ENCODE measurements at regions of chr9 and their contacts with region 1.

Region 1: GRCh38 chr9:121545875-121546423 is 46.3 kb upstream of the GGTA1 start:
- DNase-seq: peak; percentile 86 to 92
- ATAC-seq: peak; percentile 81 to 82
- H3K4me3 ChIP-seq: peak overlapping the region; percentile 10 to 40 (median 35)
- H3K27ac ChIP-seq: peak overlapping the region in 1 of 4 donors; percentile 34
- H3K4me1 ChIP-seq: peaks cover 0 to 9% of the 10 kb centered on the region in 2 donors
- H3K27me3 ChIP-seq: no peaks in the 10 kb centered on the region
- CTCF ChIP-seq: peak; percentile 80 to 98 (median 96)
- POLR2A ChIP-seq: no peak

Region 2: DNA sequence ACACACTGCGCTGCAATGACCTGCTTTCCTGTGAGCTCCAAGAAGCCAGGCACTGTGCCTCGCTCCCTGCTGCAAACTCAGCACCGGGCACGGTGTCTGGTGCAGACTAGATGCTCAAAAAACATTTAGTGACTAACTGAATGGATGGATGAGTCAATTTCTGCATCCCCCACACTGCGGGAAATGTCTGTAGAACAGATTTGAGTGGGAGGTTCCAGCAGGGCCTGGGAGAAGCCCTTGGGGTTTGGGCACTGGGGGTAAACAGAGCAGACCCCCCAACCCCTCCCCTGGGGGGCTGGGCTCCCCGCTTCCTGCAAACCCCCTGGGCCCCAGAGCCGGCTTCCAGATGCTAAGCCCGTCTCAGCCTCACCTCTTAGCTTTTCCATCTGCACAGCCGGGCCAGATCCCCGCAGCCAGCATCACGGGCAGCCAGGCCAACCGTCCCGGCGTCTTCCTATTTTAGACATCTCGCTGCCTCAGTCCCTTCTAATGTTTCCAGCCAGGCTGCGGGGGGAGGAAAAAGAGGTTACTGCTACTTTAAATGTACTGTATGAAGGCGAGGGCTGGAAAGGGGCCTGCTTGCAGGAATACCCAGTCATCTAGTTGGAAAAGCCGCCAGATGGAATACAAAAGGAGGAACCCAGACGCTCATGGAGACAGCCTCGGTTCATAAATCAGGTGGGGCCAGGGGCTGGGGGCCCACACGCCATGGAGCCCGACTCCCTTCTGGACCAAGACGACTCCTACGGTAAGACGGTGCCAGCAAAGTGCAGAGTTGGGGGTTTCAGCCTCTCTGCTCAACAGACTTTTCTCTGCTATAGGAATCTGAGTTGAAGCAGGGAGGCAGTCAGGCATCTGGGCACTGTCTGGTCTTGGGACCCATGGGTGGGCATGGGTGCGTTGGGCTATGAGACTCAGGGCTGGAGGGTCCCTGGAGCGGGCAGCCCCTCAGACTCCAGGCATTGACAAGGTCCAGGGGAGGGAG is 20.8 kb after region 1 on chr9:
- in situ Hi-C with region 1: no loop called
- intact Hi-C with region 1: loop called (anchors 2 kb)
- DNase-seq: peak; percentile 84 to 93
- ATAC-seq: peak; percentile 83
- H3K4me3 ChIP-seq: peak overlapping the region; percentile 45 to 57 (median 52)
- H3K27ac ChIP-seq: peak overlapping the region; percentile 91 to 97 (median 96)
- H3K4me1 ChIP-seq: peaks cover 60 to 63% of the 10 kb centered on the region in 2 donors
- H3K27me3 ChIP-seq: no peaks in the 10 kb centered on the region
- CTCF ChIP-seq: no peak
- POLR2A ChIP-seq: no peak

Region 3: DNA sequence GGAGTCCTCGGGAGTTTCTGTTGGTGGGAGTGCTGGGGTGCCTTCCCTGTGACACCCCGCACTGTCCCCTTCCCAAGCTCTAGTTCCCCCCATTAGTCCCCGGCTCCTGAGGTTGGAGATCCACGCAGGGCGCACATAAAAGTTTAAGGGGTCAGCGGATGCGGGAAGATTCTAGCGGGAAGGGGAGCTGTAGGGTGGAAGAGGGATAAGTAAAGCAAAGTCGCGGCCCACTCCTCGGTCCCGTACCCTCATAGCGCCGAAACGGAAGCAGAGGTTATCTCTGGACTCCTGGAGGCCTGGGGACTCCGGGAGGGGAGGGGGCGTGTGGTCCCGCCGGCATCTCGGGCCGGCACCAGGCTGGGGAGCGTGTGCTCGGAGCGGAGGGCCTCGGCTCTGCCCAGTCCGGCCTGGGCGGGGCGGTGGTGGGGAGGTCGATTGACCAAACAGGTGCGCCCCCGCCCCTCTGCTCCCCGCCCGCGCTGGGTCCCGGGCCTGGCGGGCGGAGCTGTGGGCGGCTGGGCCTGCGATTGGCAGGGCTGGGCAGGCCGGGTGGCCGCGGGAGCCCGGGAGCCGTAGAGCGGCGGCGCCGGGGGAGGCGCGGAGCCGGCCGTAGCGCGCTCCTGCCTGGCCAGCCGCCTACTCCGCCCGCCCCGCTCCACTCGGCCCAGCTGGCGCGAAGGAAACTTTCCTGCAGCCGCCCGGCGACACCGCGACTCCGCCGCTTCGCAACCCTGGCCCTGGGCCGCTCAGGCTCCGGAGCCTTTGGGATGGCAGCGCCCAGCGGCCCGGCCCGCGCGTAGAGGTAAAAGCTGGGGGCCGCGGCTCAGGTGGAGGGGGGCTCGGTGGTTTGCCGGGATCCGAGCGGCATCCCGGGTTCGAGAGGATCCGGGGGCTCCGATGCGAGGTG is 53.3 kb after region 1 on chr9:
- in situ Hi-C with region 1: no loop called
- intact Hi-C with region 1: loop called (anchors 2 kb)
- DNase-seq: peak; percentile 83 to 90
- ATAC-seq: peak; percentile 55 to 68
- H3K4me3 ChIP-seq: peak overlapping the region; percentile 70 to 98 (median 76)
- H3K27ac ChIP-seq: peak overlapping the region; percentile 94 to 98 (median 96)
- H3K4me1 ChIP-seq: peaks cover 40 to 41% of the 10 kb centered on the region in 2 donors
- H3K27me3 ChIP-seq: no peaks in the 10 kb centered on the region
- CTCF ChIP-seq: peak in 1 of 5 experiments; percentile 8
- POLR2A ChIP-seq: peak; percentile 89 to 92

Region 4: DNA sequence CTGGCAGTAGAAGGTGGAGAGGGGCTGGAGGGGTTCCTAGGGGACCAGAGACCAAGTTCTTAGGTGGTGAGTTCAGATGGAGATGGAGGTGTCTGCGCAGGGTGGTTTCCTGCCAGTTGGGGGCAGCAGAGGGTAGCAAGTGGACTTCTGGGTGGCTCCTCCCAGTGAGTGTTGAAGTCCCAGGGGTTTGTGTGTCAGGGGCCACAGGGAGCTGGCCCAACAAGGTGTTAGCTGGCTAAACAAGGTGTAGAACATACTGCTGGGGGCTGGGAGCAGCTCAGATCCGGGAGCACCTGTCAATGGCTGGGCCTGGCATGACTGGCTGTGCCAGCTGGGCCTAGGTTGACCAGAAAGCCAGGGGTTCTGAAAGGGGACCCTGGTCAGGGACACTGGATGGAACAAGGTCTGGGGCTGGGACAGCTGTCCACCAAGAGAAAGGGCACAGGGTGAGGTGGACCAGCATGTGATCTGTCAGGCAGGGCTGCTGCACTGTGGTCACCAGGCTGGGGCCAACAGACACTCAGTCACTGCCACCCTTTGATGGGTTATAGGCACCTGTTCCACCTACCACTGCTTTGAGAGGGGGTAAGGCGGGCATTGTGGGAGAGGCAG is 141.1 kb after region 1 on chr9:
- in situ Hi-C with region 1: loop called in 2 of 4 experiments (anchors 5 kb)
- intact Hi-C with region 1: loop called (anchors 5 kb)
- DNase-seq: peak; percentile 57 to 80
- ATAC-seq: peak; percentile 77 to 86
- H3K4me3 ChIP-seq: no peak overlapping the region
- H3K27ac ChIP-seq: peak overlapping the region; percentile 65 to 69 (median 67)
- H3K4me1 ChIP-seq: peaks cover 20 to 23% of the 10 kb centered on the region in 2 donors
- H3K27me3 ChIP-seq: no peaks in the 10 kb centered on the region
- CTCF ChIP-seq: peak; percentile 80 to 90 (median 87)
- POLR2A ChIP-seq: no peak

Region 5: DNA sequence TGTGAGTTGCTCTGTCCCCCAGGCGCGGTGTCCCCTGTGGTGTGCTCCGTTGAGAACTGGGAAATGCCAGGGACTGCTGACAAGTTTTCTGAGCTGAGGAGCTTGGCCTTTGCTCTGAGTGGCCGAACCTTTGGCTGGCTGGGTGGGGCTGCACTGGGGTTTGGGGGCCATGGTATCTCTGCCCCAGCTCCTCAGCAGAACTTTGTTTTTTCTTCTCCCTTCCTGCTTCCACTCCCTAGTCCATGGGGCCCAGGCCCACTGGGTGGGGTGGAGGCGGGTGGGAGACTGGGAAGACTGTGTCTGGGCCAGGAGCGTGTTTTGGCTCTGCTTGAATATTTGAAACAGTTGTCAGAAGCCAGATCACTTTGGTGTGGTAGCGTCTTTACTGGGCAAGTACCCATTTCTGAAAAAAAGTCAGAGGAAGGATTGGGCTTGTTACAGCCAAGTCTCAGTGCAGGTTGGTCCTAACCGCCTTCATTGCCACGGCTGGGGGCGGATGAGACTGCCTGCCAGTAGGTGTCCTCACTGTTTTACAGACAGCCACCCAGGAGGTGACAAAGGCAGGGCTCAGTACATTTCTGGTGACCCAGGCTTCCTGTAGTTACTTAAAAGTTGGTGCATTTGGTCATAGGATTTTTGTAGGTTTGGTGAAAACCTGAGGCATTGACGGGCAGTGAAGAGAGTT is 198.2 kb after region 1 on chr9:
- in situ Hi-C with region 1: no loop called
- intact Hi-C with region 1: loop called (anchors 5 kb)
- DNase-seq: peak; percentile 70 to 79
- ATAC-seq: peak; percentile 64 to 65
- H3K4me3 ChIP-seq: peak overlapping the region; percentile 54 to 61 (median 56)
- H3K27ac ChIP-seq: peak overlapping the region; percentile 91 to 98 (median 94)
- H3K4me1 ChIP-seq: peaks cover 81 to 84% of the 10 kb centered on the region in 2 donors
- H3K27me3 ChIP-seq: no peaks in the 10 kb centered on the region
- CTCF ChIP-seq: peak; percentile 34 to 73 (median 58)
- POLR2A ChIP-seq: no peak

Region 6: DNA sequence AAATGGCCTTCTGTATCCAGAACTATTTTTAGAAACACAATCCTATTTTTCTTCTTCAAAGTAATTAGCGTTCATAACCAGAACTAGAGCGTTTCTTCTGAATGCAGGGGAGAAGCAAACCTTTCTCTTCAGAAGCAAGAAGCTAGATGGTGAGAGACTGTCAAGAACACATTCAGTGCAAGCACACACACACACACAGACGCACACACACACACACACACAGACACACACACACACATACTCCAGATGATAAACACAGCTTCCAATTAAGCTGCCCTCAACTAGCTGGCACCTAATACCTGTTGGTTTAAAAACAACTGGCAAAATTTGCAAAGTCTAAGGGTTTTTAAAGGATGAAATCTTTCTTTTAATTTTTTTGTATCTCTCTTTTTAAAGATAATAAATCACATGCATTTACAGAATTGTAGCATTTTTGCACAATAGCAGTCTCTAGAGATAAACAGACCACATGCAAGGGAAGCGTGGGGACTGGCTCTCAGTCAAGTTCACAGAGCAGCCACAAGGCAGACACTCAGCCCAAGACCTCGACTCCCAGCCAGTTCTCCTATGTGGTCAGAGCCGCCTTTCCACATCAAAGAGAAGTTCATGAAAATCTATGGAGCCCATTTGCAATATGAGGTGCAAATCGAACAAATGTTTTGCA is 408.7 kb after region 1 on chr9:
- in situ Hi-C with region 1: no loop called
- intact Hi-C with region 1: no loop called
- DNase-seq: peak; percentile 36 to 41
- ATAC-seq: peak; percentile 39 to 57
- H3K4me3 ChIP-seq: no peak overlapping the region
- H3K27ac ChIP-seq: no peak overlapping the region
- H3K4me1 ChIP-seq: no peaks in the 10 kb centered on the region
- H3K27me3 ChIP-seq: no peaks in the 10 kb centered on the region
- CTCF ChIP-seq: no peak
- POLR2A ChIP-seq: no peak

Region 7: DNA sequence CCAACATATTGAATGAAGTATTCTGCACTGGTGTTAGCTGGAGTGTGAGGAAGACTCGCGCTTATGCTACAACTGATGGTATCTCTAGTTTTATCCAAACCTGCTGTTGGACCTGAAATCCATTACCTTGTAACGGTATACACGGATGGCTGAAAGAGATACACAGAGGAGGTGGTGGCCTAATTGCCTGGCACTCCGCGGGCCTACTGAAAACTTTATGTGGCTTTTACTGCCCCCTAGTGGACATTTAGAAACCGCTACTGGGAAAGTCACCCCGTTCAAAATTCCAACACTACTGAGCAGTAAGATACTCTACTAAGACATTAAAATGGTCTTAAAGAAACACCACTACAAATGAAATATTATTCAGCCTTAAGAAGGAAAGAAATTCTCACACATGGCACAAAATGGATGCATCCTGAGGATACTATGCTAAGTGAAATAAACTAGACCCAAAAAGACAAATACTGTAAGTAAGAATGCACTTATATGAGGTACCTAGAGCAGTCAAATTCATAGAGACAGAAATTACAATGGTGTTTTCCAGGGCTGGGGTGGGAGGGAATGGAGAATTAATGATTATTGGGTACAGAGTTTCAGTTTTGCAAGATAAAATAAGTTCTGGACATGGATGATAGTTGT is 446.7 kb after region 1 on chr9:
- in situ Hi-C with region 1: loop called (anchors 5 to 10 kb)
- intact Hi-C with region 1: loop called (anchors 2 kb)
- DNase-seq: peak; percentile 58 to 76
- ATAC-seq: peak; percentile 88 to 90
- H3K4me3 ChIP-seq: no peak overlapping the region
- H3K27ac ChIP-seq: peak overlapping the region in 1 of 4 donors; percentile 30
- H3K4me1 ChIP-seq: peaks cover 30 to 32% of the 10 kb centered on the region in 2 donors
- H3K27me3 ChIP-seq: no peaks in the 10 kb centered on the region
- CTCF ChIP-seq: peak; percentile 83 to 90 (median 86)
- POLR2A ChIP-seq: no peak

Region 8: DNA sequence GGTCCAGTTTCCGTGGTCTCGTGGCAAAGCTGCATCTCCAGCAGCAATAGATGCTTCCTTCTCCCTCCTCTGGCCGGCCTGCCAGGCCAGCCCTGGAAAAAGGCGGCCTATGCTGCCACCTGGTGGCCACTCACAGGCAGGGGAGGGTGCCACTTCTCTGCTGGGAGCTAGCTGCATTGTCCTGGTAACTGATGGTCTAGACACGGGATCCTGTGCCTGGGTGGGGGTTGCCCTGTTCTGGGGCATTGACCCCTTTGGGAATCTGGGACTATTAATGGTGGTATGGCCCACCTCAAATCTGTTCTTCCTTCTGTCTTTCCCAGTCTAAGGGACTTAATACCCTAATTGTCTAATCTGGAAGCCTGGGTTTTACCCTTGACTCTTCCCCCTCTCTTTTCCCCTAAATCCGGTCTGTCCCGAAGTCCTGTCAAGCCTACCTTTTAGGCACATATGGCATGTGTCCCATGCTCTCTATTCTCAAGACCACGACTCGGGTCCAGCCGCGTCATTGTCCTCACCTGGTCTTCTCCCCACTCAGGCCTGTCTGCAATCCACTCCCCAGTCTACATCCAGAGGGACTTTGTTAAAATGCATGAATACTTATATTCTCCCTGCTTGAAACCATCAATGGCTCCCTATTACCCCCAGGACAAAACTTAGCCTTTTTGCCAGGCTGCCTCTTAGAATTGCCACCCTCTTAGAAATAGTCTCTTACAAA is 804.8 kb after region 1 on chr9:
- in situ Hi-C with region 1: loop called in 1 of 4 experiments (anchors 25 kb)
- intact Hi-C with region 1: loop called (anchors 10 kb)
- DNase-seq: peak; percentile 50 to 65
- ATAC-seq: peak; percentile 80 to 88
- H3K4me3 ChIP-seq: no peak overlapping the region
- H3K27ac ChIP-seq: no peak overlapping the region
- H3K4me1 ChIP-seq: peaks cover 0 to 8% of the 10 kb centered on the region in 2 donors
- H3K27me3 ChIP-seq: no peaks in the 10 kb centered on the region
- CTCF ChIP-seq: peak; percentile 92 to 96 (median 96)
- POLR2A ChIP-seq: no peak